ENCODE measurements at regions of chr4 and their contacts with region 1.

Region 1: GRCh38 chr4:20773144-20773997 is 73.1 kb downstream of the PACRGL start:
- DNase-seq: no peak
- H3K4me3 ChIP-seq: no peak overlapping the region
- H3K27ac ChIP-seq: no peak overlapping the region
- H3K4me1 ChIP-seq: peaks cover 0 to 9% (median 4%) of the 10 kb centered on the region in 4 donors
- H3K27me3 ChIP-seq: no peaks in the 10 kb centered on the region
- CTCF ChIP-seq: peak; percentile 49 to 67 (median 64)
- EP300 ChIP-seq: no peak
- POLR2A ChIP-seq: no peak

Region 2: GRCh38 chr4:20283039-20283438 is 490.3 kb before region 1 on chr4:
- intact Hi-C with region 1: no loop called
- DNase-seq: no peak
- H3K4me3 ChIP-seq: no peak overlapping the region
- H3K27ac ChIP-seq: no peak overlapping the region
- H3K4me1 ChIP-seq: peaks cover 0 to 14% (median 3%) of the 10 kb centered on the region in 4 donors
- H3K27me3 ChIP-seq: no peaks in the 10 kb centered on the region
- CTCF ChIP-seq: no peak
- EP300 ChIP-seq: no peak
- POLR2A ChIP-seq: no peak

Region 3: DNA sequence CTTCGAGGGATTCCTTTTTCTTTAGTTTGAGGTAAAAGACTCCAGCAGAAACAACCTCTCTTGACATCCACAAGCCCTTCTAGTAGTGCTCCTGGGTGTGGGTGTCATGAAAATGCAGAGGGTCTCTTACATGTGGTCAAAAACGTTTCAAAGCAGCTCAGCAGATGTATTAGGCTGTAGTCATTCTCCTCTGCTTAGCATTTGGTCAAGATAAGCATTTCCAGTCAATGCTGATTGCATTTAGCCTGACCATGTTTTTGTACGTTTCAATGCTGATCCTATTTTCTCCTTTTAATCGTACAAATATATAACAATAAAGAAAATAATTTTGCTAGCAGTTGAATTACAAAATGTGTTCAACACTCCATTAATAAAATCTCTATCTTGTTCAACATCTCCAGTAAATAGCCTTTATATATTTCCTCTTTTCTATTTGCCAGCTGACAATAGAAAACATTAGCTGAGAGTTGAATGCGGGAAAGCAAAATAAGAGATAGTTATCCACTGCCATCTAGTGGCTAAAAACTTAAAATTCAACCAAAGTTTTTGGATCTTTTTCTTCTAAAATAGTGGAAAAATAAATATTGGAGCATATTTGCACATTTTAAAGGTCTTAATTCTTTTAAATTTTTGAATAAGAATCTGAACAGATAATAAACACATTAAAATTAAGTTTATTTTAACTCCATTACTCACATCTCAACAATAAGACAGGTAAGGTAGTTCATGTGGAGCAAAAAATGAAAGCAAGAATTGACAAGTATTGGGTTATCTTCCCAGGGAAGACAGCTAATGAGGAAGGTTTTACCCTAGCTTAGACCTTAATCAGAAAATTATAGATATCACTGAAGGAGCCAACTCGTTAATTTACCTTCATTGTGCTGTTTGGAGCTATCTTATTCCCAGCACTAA is 88.3 kb before region 1 on chr4:
- intact Hi-C with region 1: no loop called
- DNase-seq: no peak
- H3K4me3 ChIP-seq: no peak overlapping the region
- H3K27ac ChIP-seq: no peak overlapping the region
- H3K4me1 ChIP-seq: peaks cover 0 to 30% (median 25%) of the 10 kb centered on the region in 4 donors
- H3K27me3 ChIP-seq: no peaks in the 10 kb centered on the region
- CTCF ChIP-seq: peak; percentile 54 to 67 (median 65)
- EP300 ChIP-seq: no peak
- POLR2A ChIP-seq: no peak

Region 4: DNA sequence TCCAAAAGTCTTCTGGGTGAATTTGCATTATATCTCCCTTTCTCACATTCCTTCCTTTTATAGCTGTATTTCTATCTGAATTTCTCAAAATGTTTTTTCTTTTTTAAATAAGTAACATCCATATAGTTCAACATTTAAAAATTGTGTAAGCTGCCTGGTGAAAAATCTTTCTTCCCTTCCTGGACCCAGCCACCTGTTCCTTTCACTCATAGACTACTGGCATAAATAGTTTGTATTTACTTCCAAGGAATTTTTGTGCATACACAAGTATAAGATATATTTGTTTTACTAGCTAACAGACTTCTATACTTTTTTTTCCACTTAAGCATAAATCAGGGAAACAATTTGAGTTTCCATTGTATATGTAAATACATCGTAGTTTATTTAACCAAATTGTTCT is 37.4 kb before region 1 on chr4:
- intact Hi-C with region 1: no loop called
- DNase-seq: no peak
- H3K4me3 ChIP-seq: no peak overlapping the region
- H3K27ac ChIP-seq: no peak overlapping the region
- H3K4me1 ChIP-seq: no peaks in the 10 kb centered on the region
- H3K27me3 ChIP-seq: no peaks in the 10 kb centered on the region
- CTCF ChIP-seq: no peak
- EP300 ChIP-seq: no peak
- POLR2A ChIP-seq: no peak

Region 5: DNA sequence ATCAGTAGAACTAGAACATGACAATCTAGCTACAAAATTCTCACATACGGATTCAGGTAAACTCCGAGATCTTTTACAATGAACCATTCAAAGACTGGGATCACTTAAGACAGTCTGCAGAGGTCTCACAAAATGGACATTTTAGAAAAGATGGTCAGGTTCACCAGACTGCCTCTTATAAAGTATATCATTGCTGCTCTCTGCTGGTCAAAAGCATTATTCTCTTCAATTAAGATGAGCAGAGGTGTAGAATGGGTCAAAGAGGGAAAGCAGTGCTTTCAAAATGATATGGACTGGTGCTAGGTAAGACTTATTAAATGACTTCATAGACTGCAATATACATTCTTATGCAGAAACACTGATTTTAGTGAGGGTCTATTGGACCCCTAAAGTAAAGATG is 361.6 kb after region 1 on chr4:
- intact Hi-C with region 1: loop called (anchors 2 kb)
- DNase-seq: no peak
- H3K4me3 ChIP-seq: no peak overlapping the region
- H3K27ac ChIP-seq: no peak overlapping the region
- H3K4me1 ChIP-seq: no peaks in the 10 kb centered on the region
- H3K27me3 ChIP-seq: no peaks in the 10 kb centered on the region
- CTCF ChIP-seq: peak in 1 of 3 experiments; percentile 27
- EP300 ChIP-seq: no peak
- POLR2A ChIP-seq: no peak

Region 6: GRCh38 chr4:21192367-21192766 is 419.0 kb after region 1 on chr4:
- intact Hi-C with region 1: no loop called
- DNase-seq: no peak
- H3K4me3 ChIP-seq: no peak overlapping the region
- H3K27ac ChIP-seq: no peak overlapping the region
- H3K4me1 ChIP-seq: no peaks in the 10 kb centered on the region
- H3K27me3 ChIP-seq: no peaks in the 10 kb centered on the region
- CTCF ChIP-seq: no peak
- EP300 ChIP-seq: no peak
- POLR2A ChIP-seq: no peak

Region 7: GRCh38 chr4:21469438-21470300 is 696.3 kb after region 1 on chr4:
- intact Hi-C with region 1: loop called (anchors 2 kb)
- DNase-seq: no peak
- H3K4me3 ChIP-seq: no peak overlapping the region
- H3K27ac ChIP-seq: no peak overlapping the region
- H3K4me1 ChIP-seq: no peaks in the 10 kb centered on the region
- H3K27me3 ChIP-seq: no peaks in the 10 kb centered on the region
- CTCF ChIP-seq: peak; percentile 32 to 40 (median 38)
- EP300 ChIP-seq: no peak
- POLR2A ChIP-seq: no peak

Region 8: GRCh38 chr4:21765810-21766407 is 992.5 kb after region 1 on chr4:
- intact Hi-C with region 1: loop called (anchors 5 kb)
- DNase-seq: no peak
- H3K4me3 ChIP-seq: no peak overlapping the region
- H3K27ac ChIP-seq: no peak overlapping the region
- H3K4me1 ChIP-seq: no peaks in the 10 kb centered on the region
- H3K27me3 ChIP-seq: no peaks in the 10 kb centered on the region
- CTCF ChIP-seq: peak; percentile 62 to 84 (median 76)
- EP300 ChIP-seq: no peak
- POLR2A ChIP-seq: no peak